ENCODE measurements at regions of chr17 and their contacts with region 1.

Region 1: GRCh38 chr17:17356149-17356930 is 53.2 kb downstream of the NT5M start:
- DNase-seq: peak; percentile 76 to 97 (median 84)

Region 2: DNA sequence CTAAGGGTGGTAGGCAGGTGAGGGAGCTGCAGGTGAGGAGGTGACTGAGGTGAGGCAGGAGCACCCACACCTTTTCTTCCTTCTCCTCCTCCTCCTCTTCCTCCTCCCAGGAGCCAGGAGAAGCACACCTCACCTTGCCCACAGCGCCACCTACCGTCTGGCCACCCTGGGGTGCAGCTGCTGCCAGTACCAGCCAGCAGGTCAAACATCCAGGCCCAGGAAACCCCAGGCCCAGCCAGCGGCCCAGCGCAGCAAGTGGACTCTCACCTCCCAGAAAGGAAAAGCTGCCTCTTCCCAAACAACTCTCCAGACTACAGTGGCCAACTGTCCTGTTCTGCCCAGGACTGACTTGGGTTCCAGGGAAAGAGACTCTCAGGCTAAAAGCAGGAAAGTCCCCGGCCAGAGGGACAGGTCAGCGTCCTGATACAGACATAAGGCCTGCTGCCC is 212.4 kb after region 1 on chr17:
- intact Hi-C with region 1: loop called (anchors 2 kb)
- DNase-seq: peak in 9 of 10 donors; percentile 59 to 94 (median 70)

Region 3: GRCh38 chr17:17641621-17642409 is 285.5 kb after region 1 on chr17:
- intact Hi-C with region 1: loop called (anchors 1 kb)
- DNase-seq: peak; percentile 60 to 97 (median 86)